Endothelial cell of umbilical vein (primary cell): ENCODE measurements at regions of chr17 and their contacts with region 1.

Region 1: GRCh38 chr17:18183334-18184142 is at the start of gene ALKBH5:
- DNase-seq: peak; percentile 99
- H3K4me3 ChIP-seq: peak within 1 kb of the TSS; percentile 79 to 94 (median 80)
- H3K27ac ChIP-seq: peak within 1 kb of the TSS; percentile 86
- H3K4me1 ChIP-seq: peaks cover 44% of the 10 kb centered on the region
- H3K27me3 ChIP-seq: no peaks in the 10 kb centered on the region
- CTCF ChIP-seq: peak; percentile 25 to 30
- POLR2A ChIP-seq: peak; percentile 23
- total RNA-seq, gene ALKBH5: 70.7 and 71.0 TPM in 2 replicates

Region 2: GRCh38 chr17:18217412-18218015 is 34.0 kb after region 1 on chr17:
- CTCF ChIA-PET with region 1: interaction called, 10 read pairs
- POLR2A ChIA-PET with region 1: no interaction called
- dilution Hi-C with region 1: no loop called
- intact Hi-C with region 1: no loop called
- DNase-seq: peak; percentile 63
- H3K4me3 ChIP-seq: no peak overlapping the region
- H3K27ac ChIP-seq: no peak overlapping the region
- H3K4me1 ChIP-seq: peaks cover 7% of the 10 kb centered on the region
- H3K27me3 ChIP-seq: no peaks in the 10 kb centered on the region
- CTCF ChIP-seq: peak; percentile 82 to 95
- POLR2A ChIP-seq: no peak